Caco-2 (cell line): ENCODE measurements at regions of chr9 and their contacts with region 1.

Region 1: GRCh38 chr9:101354143-101354764 is 30.6 kb downstream of the BAAT start:
- DNase-seq: peak; percentile 71 to 74
- H3K4me3 ChIP-seq: no peak overlapping the region
- H3K4me3 Mint-ChIP-seq: peak overlapping the region; percentile 63
- H3K27ac Mint-ChIP-seq: peak overlapping the region; percentile 87
- H3K4me1 ChIP-seq: peaks cover 39% of the 10 kb centered on the region
- H3K4me1 Mint-ChIP-seq: peaks cover 19% of the 10 kb centered on the region
- H3K27me3 ChIP-seq: no peaks in the 10 kb centered on the region
- H3K27me3 Mint-ChIP-seq: no peaks in the 10 kb centered on the region
- CTCF ChIP-seq: no peak

Region 2: GRCh38 chr9:101366038-101366756 is 11.9 kb after region 1 on chr9:
- CTCF ChIA-PET with region 1: no interaction called
- POLR2A ChIA-PET with region 1: no interaction called
- intact Hi-C with region 1: loop called (anchors 1 kb)
- DNase-seq: peak in 1 of 2 experiments; percentile 56
- H3K4me3 ChIP-seq: peak overlapping the region; percentile 18; the same call in 1 of the 2 replicates
- H3K4me3 Mint-ChIP-seq: peak overlapping the region; percentile 67
- H3K27ac Mint-ChIP-seq: peak overlapping the region; percentile 30
- H3K4me1 ChIP-seq: peaks cover 41% of the 10 kb centered on the region
- H3K4me1 Mint-ChIP-seq: peaks cover 22% of the 10 kb centered on the region
- H3K27me3 ChIP-seq: no peaks in the 10 kb centered on the region
- H3K27me3 Mint-ChIP-seq: no peaks in the 10 kb centered on the region
- CTCF ChIP-seq: no peak

Region 3: DNA sequence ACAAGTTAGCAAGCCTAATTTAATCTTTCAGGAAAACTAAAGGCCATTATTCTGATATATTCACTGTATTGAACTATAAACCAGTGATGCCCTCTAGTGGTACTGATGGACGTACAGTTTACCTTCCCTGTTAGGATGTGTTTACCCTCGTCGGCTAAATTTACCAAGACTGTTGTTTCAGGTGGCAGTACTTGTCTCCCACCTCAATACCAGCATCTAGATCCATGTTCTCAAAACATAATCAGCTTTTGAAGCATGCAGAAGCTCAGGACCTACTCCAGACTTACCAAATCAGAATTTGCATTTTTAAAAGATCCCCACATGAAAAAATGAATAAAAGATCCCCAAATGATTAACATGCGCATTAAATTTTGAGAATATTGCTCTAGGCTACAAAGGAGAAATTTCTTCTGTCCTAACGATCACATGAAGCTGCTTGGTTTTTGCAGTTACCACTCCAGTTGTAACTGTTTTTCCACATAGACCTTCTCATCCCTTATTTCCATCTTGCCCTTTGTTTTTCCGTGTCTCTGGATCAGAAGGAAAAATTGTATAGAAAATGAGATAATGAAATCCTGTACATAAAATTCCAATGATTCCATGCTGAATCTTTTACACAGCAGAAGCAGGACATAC is 33.7 kb after region 1 on chr9:
- CTCF ChIA-PET with region 1: no interaction called
- POLR2A ChIA-PET with region 1: no interaction called
- intact Hi-C with region 1: loop called (anchors 1 kb)
- DNase-seq: peak; percentile 36 to 46
- H3K4me3 ChIP-seq: no peak overlapping the region
- H3K4me3 Mint-ChIP-seq: no peak overlapping the region
- H3K27ac Mint-ChIP-seq: no peak overlapping the region
- H3K4me1 ChIP-seq: 0 out of 2 replicates have a peak, but pooled peaks cover 3% of the 10 kb centered on the region
- H3K4me1 Mint-ChIP-seq: peaks cover 13% of the 10 kb centered on the region
- H3K27me3 ChIP-seq: no peaks in the 10 kb centered on the region
- H3K27me3 Mint-ChIP-seq: no peaks in the 10 kb centered on the region
- CTCF ChIP-seq: peak; percentile 43 to 46